CD4-positive, alpha-beta memory T cell (primary cell): ENCODE measurements at regions of chr10 and their contacts with region 1.

Region 1: DNA sequence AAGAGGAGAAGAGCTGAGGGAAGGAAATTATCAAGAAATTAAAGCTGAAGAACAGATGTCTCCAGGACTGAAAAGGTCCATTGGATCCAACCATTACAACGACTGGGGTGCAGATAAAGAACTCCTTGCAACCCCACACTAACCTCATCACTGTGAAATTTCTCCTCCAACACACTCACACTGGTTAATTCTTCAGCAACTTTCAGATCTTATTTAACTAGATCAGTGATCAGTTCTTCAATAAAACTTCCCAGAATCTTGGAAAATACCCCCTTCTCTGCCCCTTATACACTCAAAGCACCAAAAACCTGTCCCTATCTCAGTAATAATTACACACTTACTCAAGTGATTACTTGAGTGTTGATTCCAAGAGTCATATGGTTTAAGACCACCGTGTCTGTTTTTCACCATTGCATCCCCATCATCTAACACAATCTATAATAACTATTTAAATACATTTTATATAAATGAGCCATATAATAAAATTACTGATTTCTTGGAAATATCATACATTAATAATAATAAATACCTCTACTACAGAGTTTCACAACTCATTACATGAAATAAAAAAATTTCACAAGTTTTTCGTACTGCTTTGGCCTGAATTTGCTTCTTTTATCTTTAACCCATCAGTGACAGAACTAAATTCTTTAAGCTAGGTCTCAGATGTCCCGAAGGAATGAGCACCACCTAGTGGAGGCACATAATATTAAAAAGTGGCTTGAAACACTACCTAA is 123.7 kb downstream of the MPP7 start:
- DNase-seq: peak; percentile 49 to 63 (median 55)
- H3K4me3 ChIP-seq: peak overlapping the region; percentile 40 to 49
- H3K4me3 Mint-ChIP-seq: peak overlapping the region; percentile 89 to 99 (median 92)
- H3K27ac ChIP-seq: peak overlapping the region; percentile 50
- H3K27ac Mint-ChIP-seq: peak overlapping the region; percentile 86 to 99 (median 96)
- H3K4me1 ChIP-seq: peaks cover 24% of the 10 kb centered on the region
- H3K4me1 Mint-ChIP-seq: peaks cover 21 to 48% (median 28%) of the 10 kb centered on the region in 4 donors
- H3K27me3 ChIP-seq: no peaks in the 10 kb centered on the region
- H3K27me3 Mint-ChIP-seq: no peaks in the 10 kb centered on the region

Region 2: GRCh38 chr10:27446091-27446918 is 732.9 kb before region 1 on chr10:
- CTCF ChIA-PET with region 1: interaction called, 3 read pairs
- POLR2A ChIA-PET with region 1: no interaction called
- intact Hi-C with region 1: loop called (anchors 1 kb)
- DNase-seq: peak in 4 of 5 donors; percentile 46 to 50 (median 47)
- H3K4me3 ChIP-seq: no peak overlapping the region
- H3K4me3 Mint-ChIP-seq: peak overlapping the region in 3 of 8 donors; percentile 13 to 41 (median 36)
- H3K27ac ChIP-seq: no peak overlapping the region
- H3K27ac Mint-ChIP-seq: peak overlapping the region in 2 of 7 donors; percentile 8 to 45
- H3K4me1 ChIP-seq: peaks cover 12% of the 10 kb centered on the region
- H3K4me1 Mint-ChIP-seq: peaks cover 3 to 17% (median 13%) of the 10 kb centered on the region in 4 donors
- H3K27me3 ChIP-seq: no peaks in the 10 kb centered on the region
- H3K27me3 Mint-ChIP-seq: no peaks in the 10 kb centered on the region

Region 3: DNA sequence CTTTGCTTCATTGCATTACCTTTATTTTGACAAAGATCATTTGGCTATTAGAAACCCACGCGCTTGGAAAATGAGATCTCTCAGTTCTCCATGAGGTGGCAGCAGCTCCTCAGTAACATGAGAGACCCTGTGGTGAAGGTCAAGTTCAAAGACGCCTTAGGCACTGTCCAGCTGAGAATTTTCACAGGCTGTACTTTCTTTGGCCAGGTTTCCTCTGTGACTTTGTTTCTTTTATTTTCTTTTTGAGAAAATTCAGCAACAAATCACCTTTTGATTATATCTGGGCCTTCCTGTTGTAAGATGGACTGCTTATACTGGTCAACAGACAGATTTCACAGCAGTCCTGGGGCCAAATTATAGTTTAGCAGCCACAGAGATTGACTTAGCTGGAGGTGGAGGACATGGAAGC is 620.6 kb before region 1 on chr10:
- CTCF ChIA-PET with region 1: interaction called, 3 read pairs
- POLR2A ChIA-PET with region 1: no interaction called
- intact Hi-C with region 1: loop called (anchors 2 kb)
- DNase-seq: peak in 3 of 5 donors; percentile 19 to 38 (median 31)
- H3K4me3 ChIP-seq: no peak overlapping the region
- H3K4me3 Mint-ChIP-seq: no peak overlapping the region
- H3K27ac ChIP-seq: no peak overlapping the region
- H3K27ac Mint-ChIP-seq: no peak overlapping the region
- H3K4me1 ChIP-seq: no peaks in the 10 kb centered on the region
- H3K4me1 Mint-ChIP-seq: peaks cover 0 to 7% (median under 1%) of the 10 kb centered on the region in 4 donors
- H3K27me3 ChIP-seq: no peaks in the 10 kb centered on the region
- H3K27me3 Mint-ChIP-seq: no peaks in the 10 kb centered on the region

Region 4: GRCh38 chr10:27742195-27743011 is 436.8 kb before region 1 on chr10:
- CTCF ChIA-PET with region 1: interaction called, 25 read pairs
- POLR2A ChIA-PET with region 1: interaction called, 4 read pairs
- intact Hi-C with region 1: loop called (anchors 1 kb)
- DNase-seq: peak; percentile 77 to 82 (median 80)
- H3K4me3 ChIP-seq: peak overlapping the region; percentile 22 to 68
- H3K4me3 Mint-ChIP-seq: peak overlapping the region; percentile 82 to 96 (median 89)
- H3K27ac ChIP-seq: no peak overlapping the region
- H3K27ac Mint-ChIP-seq: peak overlapping the region in 1 of 7 donors; percentile 57
- H3K4me1 ChIP-seq: peaks cover 56% of the 10 kb centered on the region
- H3K4me1 Mint-ChIP-seq: peaks cover 23 to 47% (median 35%) of the 10 kb centered on the region in 4 donors
- H3K27me3 ChIP-seq: peaks cover 52% of the 10 kb centered on the region
- H3K27me3 Mint-ChIP-seq: peaks cover 45 to 48% of the 10 kb centered on the region in 2 donors

Region 5: DNA sequence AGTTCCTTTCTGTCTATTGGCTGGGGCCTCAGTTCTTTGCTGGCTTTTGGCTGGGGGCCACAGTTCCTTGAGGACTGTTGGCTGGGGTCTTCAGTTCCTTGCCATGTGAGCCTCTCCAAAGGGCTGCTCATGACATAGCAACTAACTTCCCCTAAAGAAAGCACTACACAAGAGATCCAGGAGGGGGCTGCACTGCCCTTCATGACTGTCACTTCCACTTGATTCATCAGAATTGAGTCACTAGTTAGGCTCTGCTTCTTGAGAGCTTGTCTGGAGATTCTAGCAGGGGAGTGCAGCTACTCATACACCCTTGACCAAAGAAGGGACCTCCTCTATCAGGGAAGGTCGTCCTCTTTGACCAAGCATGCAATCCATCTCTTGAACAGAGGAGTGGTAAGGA is 395.5 kb before region 1 on chr10:
- CTCF ChIA-PET with region 1: interaction called, 3 read pairs
- POLR2A ChIA-PET with region 1: no interaction called
- intact Hi-C with region 1: loop called (anchors 1 kb)
- DNase-seq: peak; percentile 11 to 42 (median 26)
- H3K4me3 ChIP-seq: no peak overlapping the region
- H3K4me3 Mint-ChIP-seq: no peak overlapping the region
- H3K27ac ChIP-seq: no peak overlapping the region
- H3K27ac Mint-ChIP-seq: no peak overlapping the region
- H3K4me1 ChIP-seq: no peaks in the 10 kb centered on the region
- H3K4me1 Mint-ChIP-seq: no peaks in the 10 kb centered on the region
- H3K27me3 ChIP-seq: no peaks in the 10 kb centered on the region
- H3K27me3 Mint-ChIP-seq: peaks cover 9 to 14% of the 10 kb centered on the region in 2 donors

Region 6: GRCh38 chr10:27865221-27865638 is 313.9 kb before region 1 on chr10:
- CTCF ChIA-PET with region 1: no interaction called
- POLR2A ChIA-PET with region 1: no interaction called
- intact Hi-C with region 1: loop called (anchors 1 kb)
- DNase-seq: no peak
- H3K4me3 ChIP-seq: no peak overlapping the region
- H3K4me3 Mint-ChIP-seq: no peak overlapping the region
- H3K27ac ChIP-seq: no peak overlapping the region
- H3K27ac Mint-ChIP-seq: no peak overlapping the region
- H3K4me1 ChIP-seq: no peaks in the 10 kb centered on the region
- H3K4me1 Mint-ChIP-seq: peaks cover 0 to 6% (median 1%) of the 10 kb centered on the region in 4 donors
- H3K27me3 ChIP-seq: no peaks in the 10 kb centered on the region
- H3K27me3 Mint-ChIP-seq: peaks cover 10% of the 10 kb centered on the region in 2 donors

Region 7: GRCh38 chr10:28137907-28138880 is 41.0 kb before region 1 on chr10:
- CTCF ChIA-PET with region 1: no interaction called
- POLR2A ChIA-PET with region 1: no interaction called
- intact Hi-C with region 1: no loop called
- DNase-seq: no peak
- H3K4me3 ChIP-seq: no peak overlapping the region
- H3K4me3 Mint-ChIP-seq: no peak overlapping the region
- H3K27ac ChIP-seq: no peak overlapping the region
- H3K27ac Mint-ChIP-seq: no peak overlapping the region
- H3K4me1 ChIP-seq: no peaks in the 10 kb centered on the region
- H3K4me1 Mint-ChIP-seq: peaks cover 0 to 5% (median 2%) of the 10 kb centered on the region in 4 donors
- H3K27me3 ChIP-seq: no peaks in the 10 kb centered on the region
- H3K27me3 Mint-ChIP-seq: no peaks in the 10 kb centered on the region

Region 8: GRCh38 chr10:28241741-28242399 is 62.7 kb after region 1 on chr10:
- CTCF ChIA-PET with region 1: interaction called, 4 read pairs
- POLR2A ChIA-PET with region 1: no interaction called
- intact Hi-C with region 1: loop called (anchors 5 kb)
- DNase-seq: peak in 4 of 5 donors; percentile 36 to 49 (median 42)
- H3K4me3 ChIP-seq: no peak overlapping the region
- H3K4me3 Mint-ChIP-seq: no peak overlapping the region
- H3K27ac ChIP-seq: no peak overlapping the region
- H3K27ac Mint-ChIP-seq: no peak overlapping the region
- H3K4me1 ChIP-seq: peaks cover 14% of the 10 kb centered on the region
- H3K4me1 Mint-ChIP-seq: peaks cover 13 to 20% (median 17%) of the 10 kb centered on the region in 4 donors
- H3K27me3 ChIP-seq: no peaks in the 10 kb centered on the region
- H3K27me3 Mint-ChIP-seq: no peaks in the 10 kb centered on the region